ENCODE measurements at regions of chr5 and their contacts with region 1.

Region 1: GRCh38 chr5:77143998-77144836 is 57.1 kb upstream of the ZBED3 start:
- DNase-seq: peak; percentile 34
- H3K4me3 ChIP-seq: no peak overlapping the region
- CTCF ChIP-seq: peak; percentile 93

Region 2: GRCh38 chr5:77129391-77129990 is 14.7 kb before region 1 on chr5:
- CTCF ChIA-PET with region 1: interaction called, 73 read pairs
- POLR2A ChIA-PET with region 1: no interaction called
- DNase-seq: no peak
- H3K4me3 ChIP-seq: no peak overlapping the region
- CTCF ChIP-seq: peak; percentile 71

Region 3: DNA sequence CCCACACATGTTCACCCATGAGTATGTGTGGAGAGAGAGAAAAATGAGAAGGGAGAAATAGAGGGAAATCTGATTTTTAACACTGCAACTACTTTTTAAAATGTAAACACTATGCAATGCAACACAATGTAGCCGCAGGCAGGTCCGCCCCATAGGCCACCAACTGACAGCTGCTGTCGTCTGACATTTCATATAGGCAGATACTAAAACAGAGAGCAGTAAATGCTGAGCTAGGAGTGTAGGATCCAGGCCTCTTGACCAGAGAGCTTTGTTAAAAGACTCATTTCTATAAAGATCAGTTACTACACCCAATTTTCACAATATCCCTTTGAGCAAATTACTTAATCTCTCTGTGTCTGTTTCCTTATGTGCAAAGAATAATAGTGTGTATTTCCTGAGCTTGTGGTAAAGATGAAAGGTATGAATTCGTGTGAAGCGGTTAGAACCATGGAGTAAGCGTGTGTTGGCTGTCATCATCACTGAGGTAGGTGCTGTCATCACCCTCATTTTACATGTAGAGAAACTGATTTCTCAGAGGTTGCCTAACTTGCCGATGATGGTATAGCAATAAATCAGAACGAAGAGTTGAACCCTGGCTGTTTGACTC is 11.1 kb after region 1 on chr5:
- CTCF ChIA-PET with region 1: interaction called, 39 read pairs
- POLR2A ChIA-PET with region 1: no interaction called
- DNase-seq: no peak
- H3K4me3 ChIP-seq: no peak overlapping the region
- CTCF ChIP-seq: no peak

Region 4: DNA sequence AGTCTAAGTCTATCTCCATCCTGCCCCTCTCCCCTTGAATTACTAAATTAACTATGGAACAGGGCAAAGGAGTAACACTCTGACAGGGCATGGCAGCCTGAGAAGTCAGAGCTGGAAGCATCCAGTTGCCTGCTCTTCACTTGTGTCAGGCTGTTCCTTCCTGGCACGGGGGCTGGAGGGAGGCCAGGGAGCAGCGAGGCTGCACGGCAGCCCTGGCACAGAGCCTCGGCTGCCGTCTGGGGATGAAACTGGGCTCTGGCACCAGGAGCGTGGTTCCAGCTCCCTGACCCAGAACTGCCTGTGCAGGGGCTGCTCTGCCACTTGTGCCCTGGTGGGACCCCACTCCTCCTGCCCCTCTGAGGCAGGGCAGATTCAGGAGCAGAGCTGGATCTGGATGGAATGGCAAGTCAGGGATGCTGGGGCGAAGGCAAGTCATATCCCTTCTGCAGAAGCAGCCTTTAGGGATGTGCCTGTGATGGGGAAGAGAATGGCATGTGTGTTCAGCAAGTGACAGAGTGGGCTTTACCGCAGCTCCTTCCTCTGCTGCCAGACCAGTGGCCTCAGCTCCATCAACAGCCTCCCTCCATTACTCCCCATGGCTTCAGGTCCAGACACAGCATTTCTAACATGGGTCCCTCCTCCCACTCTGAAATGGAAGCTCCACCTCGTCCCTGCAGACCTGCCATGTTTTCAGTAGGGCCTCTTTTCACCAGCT is 24.1 kb after region 1 on chr5:
- CTCF ChIA-PET with region 1: interaction called, 26 read pairs
- POLR2A ChIA-PET with region 1: no interaction called
- DNase-seq: peak; percentile 7
- H3K4me3 ChIP-seq: peak overlapping the region; percentile 35; the same call in 1 of the 2 replicates
- CTCF ChIP-seq: no peak

Region 5: DNA sequence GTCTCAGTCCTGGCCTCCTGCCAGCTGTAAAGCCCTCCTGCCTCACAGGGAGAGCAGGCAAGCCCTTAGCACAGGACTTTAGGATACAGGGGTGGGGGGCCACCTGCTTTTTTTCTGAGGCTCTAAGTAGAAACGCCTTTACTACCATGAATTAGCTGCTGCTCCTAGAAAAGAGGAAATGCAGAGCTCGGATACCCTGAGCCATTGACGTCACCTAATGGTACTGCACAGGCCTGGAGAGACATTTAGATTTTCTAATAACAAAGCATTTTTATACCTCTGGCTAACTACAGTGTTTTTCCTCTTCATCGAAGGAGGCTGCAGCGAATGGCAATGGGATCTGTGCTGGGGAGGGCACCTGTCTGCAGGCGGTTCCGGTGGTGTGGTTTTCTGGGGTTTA is 210.9 kb after region 1 on chr5:
- CTCF ChIA-PET with region 1: no interaction called
- POLR2A ChIA-PET with region 1: no interaction called
- DNase-seq: no peak
- H3K4me3 ChIP-seq: no peak overlapping the region
- CTCF ChIP-seq: no peak

Region 6: DNA sequence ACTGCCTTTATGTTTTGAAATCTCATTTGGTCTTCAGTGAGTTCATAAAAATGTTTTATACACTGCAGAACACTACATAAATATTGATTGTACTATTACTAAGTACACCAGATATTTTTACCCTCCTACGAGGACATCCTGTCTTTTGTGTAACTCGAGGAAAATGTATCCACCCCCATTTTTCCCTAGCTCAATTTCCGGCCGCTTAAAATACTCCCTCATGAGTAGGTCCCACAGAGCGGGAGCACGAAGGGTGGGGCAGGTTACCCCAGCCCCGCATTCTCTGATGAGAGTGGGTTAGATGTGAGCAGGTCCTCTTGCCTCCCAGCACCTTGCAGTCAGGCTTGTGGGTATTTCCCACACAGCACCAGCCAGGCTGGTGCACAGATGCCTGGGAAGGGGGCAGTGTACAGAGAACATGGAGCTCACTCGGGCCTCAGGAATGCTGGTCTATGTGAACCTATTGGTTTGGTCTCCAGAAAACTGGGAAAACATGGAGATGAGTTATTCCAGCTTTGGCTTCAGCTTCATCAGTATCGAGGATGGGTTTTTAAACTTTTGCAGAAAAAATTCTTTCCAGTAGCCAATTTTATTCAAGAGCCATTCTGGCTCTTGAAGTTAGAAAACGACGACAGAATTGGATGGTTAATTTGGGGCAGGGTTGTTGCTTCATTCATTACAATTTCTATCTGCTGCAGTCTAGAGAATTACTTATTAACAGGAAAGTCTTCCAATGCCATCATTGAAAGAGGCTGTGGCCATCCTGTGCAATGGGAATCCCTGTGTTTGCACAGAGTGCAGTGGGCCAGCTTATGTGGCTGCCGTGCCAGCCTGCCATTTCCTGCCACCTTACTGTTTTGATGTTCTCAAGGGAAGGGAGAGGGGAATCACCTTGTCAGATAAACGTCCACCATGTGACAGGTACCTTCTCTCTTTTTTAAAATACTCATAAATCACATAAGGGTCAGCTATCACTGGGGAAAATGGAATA is 274.7 kb after region 1 on chr5:
- CTCF ChIA-PET with region 1: interaction called, 11 read pairs
- POLR2A ChIA-PET with region 1: no interaction called
- DNase-seq: no peak
- H3K4me3 ChIP-seq: no peak overlapping the region
- CTCF ChIP-seq: no peak

Region 7: DNA sequence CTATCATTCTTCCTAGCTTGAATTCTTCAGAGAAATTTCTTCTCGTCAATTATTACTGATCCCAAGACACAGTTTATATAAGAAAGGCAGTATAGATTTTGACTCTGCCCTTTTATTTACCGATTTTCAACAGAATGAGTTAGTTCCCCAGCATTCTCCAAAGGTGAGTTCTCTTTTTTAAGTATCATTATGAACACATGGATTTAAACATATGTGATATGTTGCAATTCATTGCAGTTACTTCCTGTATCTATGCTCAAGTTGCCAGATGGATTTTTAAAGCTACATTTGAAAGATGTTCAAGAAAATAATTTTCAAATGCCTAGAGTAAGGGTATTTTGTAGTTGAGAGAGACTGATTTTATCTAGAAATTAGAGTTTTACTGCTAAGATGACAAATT is 339.5 kb after region 1 on chr5:
- CTCF ChIA-PET with region 1: interaction called, 11 read pairs
- POLR2A ChIA-PET with region 1: no interaction called
- DNase-seq: no peak
- H3K4me3 ChIP-seq: no peak overlapping the region
- CTCF ChIP-seq: no peak